Caco-2 (cell line): ENCODE measurements at regions of chr12 and their contacts with region 1.

Region 1: DNA sequence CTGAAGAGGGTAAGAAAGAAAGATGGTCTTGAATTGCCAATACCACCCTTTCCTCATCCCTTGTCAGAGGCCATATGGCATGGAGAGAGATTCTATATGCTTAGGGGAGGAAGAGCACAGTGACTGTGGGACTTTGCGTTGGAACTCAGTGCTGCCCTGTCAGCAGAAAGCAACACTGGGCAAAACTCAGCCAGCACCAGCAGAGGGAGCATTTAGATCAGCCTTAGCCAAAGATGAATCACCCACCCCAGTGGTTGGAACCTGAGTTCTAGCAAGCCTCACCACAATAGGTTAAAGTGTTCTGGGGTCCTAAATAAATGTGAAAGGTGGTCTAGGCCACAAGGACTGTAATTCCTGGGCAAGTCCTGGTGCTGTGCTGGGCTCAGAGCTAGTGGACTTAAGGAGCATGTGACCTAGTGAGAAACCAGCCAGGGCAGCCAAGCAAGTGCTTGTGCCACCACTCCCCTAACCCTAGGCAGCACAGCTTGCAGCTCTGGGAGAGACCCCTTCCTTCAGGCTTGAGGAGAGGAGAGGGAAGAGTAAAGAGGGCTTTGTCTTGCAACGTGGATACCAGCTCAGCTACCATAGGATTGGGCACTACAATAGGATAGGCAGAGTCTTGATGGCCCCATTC is 11.4 kb upstream of the BCAT1 start:
- DNase-seq: peak; percentile 56 to 68
- H3K4me3 ChIP-seq: no peak overlapping the region
- H3K4me3 Mint-ChIP-seq: no peak overlapping the region
- H3K27ac Mint-ChIP-seq: no peak overlapping the region
- H3K4me1 ChIP-seq: peaks cover 16% of the 10 kb centered on the region; the same call in 1 of the 2 replicates
- H3K4me1 Mint-ChIP-seq: peaks cover 28% of the 10 kb centered on the region
- H3K27me3 ChIP-seq: no peaks in the 10 kb centered on the region
- H3K27me3 Mint-ChIP-seq: no peaks in the 10 kb centered on the region
- CTCF ChIP-seq: peak; percentile 60 to 78

Region 2: DNA sequence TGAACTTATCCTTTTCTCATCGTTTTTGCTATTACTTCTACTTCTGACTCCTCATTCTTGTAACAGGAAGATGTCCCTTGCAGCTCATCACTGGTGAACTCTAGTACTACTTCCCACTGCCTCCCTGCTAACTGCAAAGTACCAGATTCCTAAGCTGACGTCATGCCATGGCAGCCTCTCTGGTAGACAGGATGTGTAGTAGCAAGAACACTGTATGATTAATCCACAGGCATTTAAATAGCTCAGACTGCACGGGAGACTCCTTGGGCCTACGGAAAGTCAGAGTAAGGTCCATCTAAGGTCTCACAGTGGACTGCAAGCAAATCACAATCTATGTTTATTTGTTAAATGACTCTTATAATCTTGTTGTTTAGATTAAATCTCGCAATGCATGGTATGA is 191.1 kb after region 1 on chr12:
- CTCF ChIA-PET with region 1: no interaction called
- POLR2A ChIA-PET with region 1: no interaction called
- intact Hi-C with region 1: loop called (anchors 1 kb)
- DNase-seq: no peak
- H3K4me3 ChIP-seq: no peak overlapping the region
- H3K4me3 Mint-ChIP-seq: no peak overlapping the region
- H3K27ac Mint-ChIP-seq: no peak overlapping the region
- H3K4me1 ChIP-seq: no peaks in the 10 kb centered on the region
- H3K4me1 Mint-ChIP-seq: peaks cover 6% of the 10 kb centered on the region
- H3K27me3 ChIP-seq: no peaks in the 10 kb centered on the region
- H3K27me3 Mint-ChIP-seq: no peaks in the 10 kb centered on the region
- CTCF ChIP-seq: no peak

Region 3: GRCh38 chr12:25286837-25287236 is 326.5 kb after region 1 on chr12:
- CTCF ChIA-PET with region 1: no interaction called
- POLR2A ChIA-PET with region 1: no interaction called
- intact Hi-C with region 1: no loop called
- DNase-seq: no peak
- H3K4me3 ChIP-seq: no peak overlapping the region
- H3K4me3 Mint-ChIP-seq: no peak overlapping the region
- H3K27ac Mint-ChIP-seq: no peak overlapping the region
- H3K4me1 ChIP-seq: 0 out of 2 replicates have a peak, but pooled peaks cover 6% of the 10 kb centered on the region
- H3K4me1 Mint-ChIP-seq: peaks cover 15% of the 10 kb centered on the region
- H3K27me3 ChIP-seq: no peaks in the 10 kb centered on the region
- H3K27me3 Mint-ChIP-seq: no peaks in the 10 kb centered on the region
- CTCF ChIP-seq: no peak